ENCODE measurements at regions of chr19 and their contacts with region 1.

Region 1: DNA sequence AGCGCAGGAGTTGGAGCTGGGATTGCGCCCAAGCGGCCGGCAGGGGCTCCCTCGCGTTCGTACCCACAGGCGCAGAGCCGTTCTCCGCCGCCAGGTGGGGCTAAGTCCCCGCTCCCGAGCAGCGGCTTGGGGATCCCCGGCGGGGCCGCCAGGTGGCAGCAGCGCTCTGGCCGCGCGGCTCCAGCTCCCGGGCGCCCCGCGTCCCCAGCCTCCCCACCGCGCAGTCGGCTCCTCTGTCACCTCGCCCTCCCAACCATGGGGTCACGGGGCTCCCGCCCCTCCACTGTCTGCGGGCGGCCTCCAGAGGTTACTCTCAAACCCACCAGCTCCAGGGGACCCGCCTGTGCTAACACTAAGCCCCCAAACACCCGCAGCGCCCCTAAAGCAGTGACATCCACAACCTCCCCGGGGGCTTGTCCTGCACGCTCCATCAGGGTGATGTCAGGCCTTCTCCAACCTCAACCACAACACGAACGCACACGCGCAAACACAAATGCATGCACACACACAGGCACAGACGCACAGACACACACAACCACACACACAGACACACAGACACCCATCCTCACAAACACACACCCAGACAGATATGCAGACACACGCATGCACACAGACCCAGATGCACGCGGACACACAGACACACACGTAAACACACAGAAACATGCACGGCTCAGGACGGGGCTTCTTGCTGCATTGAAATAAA is 18.4 kb upstream of the KCTD15 start:
- DNase-seq: peak; percentile 74
- H3K4me3 Mint-ChIP-seq: peak overlapping the region; percentile 4
- H3K27ac Mint-ChIP-seq: no peak overlapping the region
- H3K4me1 Mint-ChIP-seq: peaks cover 6% of the 10 kb centered on the region
- H3K27me3 Mint-ChIP-seq: peaks cover 39% of the 10 kb centered on the region
- CTCF ChIP-seq: peak; percentile 100

Region 2: GRCh38 chr19:33763633-33764371 is 14.4 kb before region 1 on chr19:
- CTCF ChIA-PET with region 1: interaction called, 13 read pairs
- POLR2A ChIA-PET with region 1: no interaction called
- intact Hi-C with region 1: no loop called
- DNase-seq: no peak
- H3K4me3 Mint-ChIP-seq: no peak overlapping the region
- H3K27ac Mint-ChIP-seq: no peak overlapping the region
- H3K4me1 Mint-ChIP-seq: no peaks in the 10 kb centered on the region
- H3K27me3 Mint-ChIP-seq: peaks cover 1% of the 10 kb centered on the region
- CTCF ChIP-seq: no peak

Region 3: DNA sequence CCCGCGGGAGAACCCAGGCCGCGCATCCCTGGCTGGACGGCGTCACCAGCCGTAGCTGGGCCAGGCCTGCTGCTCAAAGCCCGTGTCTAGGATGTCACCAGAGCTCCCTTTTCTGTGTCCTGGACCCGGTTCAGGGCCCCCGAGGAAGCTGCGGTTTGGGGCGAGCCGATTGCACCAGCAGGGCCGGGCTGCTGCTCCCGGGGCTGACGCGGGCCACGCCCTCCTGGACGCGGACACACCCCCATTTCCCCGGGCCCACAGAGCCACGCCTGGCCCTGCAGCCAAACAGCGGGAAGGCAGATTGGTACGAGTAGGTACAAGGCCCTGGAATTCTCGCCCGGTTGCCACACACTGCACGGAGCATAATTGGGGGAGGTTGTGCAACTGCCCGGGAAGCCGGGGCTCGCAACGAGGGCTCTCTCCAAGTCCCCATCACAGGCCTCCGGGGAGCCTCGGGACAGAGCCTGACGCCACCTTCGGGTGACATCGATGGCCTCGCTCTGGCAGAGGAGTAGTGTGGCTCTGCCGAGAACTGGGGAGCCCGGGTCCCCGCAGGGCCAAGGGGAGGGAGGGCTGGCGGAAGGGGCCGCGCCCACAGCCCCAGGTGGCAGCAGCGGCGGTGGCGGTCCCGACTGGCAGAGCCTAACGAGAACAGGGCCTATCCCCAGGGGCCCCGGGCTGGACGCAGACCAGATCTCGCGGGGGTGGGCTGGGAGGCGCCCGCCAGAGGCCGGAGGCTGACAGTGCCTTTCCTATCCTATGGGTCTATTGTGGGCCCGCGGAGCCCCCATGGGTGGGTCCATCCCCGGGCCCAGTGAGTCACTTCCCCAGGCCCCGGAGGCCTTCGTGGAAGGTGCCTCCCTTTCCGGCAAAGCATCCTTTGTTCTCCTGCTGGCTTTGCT is 41.9 kb after region 1 on chr19:
- CTCF ChIA-PET with region 1: interaction called, 21 read pairs
- POLR2A ChIA-PET with region 1: no interaction called
- intact Hi-C with region 1: no loop called
- DNase-seq: peak; percentile 99
- H3K4me3 Mint-ChIP-seq: peak overlapping the region; percentile 70
- H3K27ac Mint-ChIP-seq: peak overlapping the region; percentile 35
- H3K4me1 Mint-ChIP-seq: peaks cover 8% of the 10 kb centered on the region
- H3K27me3 Mint-ChIP-seq: no peaks in the 10 kb centered on the region
- CTCF ChIP-seq: no peak

Region 4: GRCh38 chr19:33998739-33999345 is 220.6 kb after region 1 on chr19:
- CTCF ChIA-PET with region 1: interaction called, 75 read pairs
- POLR2A ChIA-PET with region 1: no interaction called
- intact Hi-C with region 1: loop called (anchors 1 kb)
- DNase-seq: peak; percentile 5
- H3K4me3 Mint-ChIP-seq: no peak overlapping the region
- H3K27ac Mint-ChIP-seq: no peak overlapping the region
- H3K4me1 Mint-ChIP-seq: no peaks in the 10 kb centered on the region
- H3K27me3 Mint-ChIP-seq: peaks cover 19% of the 10 kb centered on the region
- CTCF ChIP-seq: peak; percentile 28

Region 5: DNA sequence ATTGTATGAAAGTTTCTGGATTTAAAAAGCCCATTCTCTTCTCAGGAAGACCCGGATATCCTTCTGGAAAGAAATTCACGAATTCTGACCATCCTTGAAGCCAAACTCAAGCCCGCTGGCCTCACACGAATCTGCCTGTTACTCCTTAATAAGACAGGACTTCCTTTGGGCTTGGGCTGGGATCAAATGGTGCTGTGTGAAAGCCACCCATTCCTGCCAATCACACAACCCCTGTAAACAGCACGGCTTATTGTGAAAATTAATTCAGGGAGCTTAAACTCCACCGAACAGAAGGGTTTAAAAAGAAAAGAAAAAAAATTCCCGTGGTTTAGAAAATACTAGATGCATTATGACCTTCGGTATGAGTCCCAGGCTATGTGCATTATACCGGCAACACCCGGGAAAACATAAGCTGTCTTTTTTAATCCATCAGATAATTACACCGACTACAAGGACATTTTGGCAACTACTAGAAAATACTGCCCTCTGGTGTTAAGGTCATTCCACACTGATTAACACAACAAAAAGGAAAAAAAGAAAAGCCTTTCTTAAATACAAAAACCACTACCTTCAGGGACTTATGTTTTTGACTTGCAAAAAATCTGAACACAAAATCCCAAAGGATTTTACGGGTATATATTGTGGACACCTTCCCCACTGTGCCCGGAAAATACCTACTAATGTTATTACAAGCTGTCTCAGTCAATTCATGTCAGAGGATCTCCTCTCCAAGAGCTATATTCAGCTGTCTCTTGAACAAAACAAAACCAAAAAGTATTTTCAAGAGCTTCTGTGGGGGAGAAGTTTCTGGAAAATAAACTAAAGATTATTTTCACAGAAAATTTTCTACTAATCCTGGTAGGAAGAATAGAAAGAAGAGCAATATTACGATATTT is 318.0 kb after region 1 on chr19:
- CTCF ChIA-PET with region 1: interaction called, 129 read pairs
- POLR2A ChIA-PET with region 1: interaction called, 4 read pairs
- intact Hi-C with region 1: loop called (anchors 1 kb)
- DNase-seq: peak; percentile 69
- H3K4me3 Mint-ChIP-seq: no peak overlapping the region
- H3K27ac Mint-ChIP-seq: no peak overlapping the region
- H3K4me1 Mint-ChIP-seq: no peaks in the 10 kb centered on the region
- H3K27me3 Mint-ChIP-seq: peaks cover 28% of the 10 kb centered on the region
- CTCF ChIP-seq: peak; percentile 65

Region 6: DNA sequence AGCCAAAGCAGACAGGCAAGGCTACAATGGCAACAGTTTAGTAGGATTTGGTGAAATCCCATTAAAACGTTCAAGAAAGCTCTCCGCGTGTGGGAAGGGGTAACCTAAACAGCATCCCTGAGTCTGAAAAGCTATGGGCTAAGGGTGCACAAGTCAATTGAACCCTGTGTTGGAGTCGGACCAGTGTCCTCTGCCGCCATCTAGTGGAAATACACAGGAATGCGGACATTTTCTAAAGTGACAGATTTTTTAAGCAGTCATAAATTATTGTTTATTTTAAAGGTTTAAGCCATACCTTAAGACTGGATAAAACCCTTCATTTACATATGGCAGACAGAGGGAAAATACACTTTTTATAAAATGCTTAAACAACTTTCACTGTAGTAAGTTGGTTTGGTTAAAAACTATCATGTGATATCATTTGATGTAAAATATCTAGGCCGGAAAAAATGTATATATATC is 367.5 kb after region 1 on chr19:
- CTCF ChIA-PET with region 1: interaction called, 64 read pairs
- POLR2A ChIA-PET with region 1: no interaction called
- intact Hi-C with region 1: loop called (anchors 5 kb)
- DNase-seq: peak; percentile 77
- H3K4me3 Mint-ChIP-seq: no peak overlapping the region
- H3K27ac Mint-ChIP-seq: no peak overlapping the region
- H3K4me1 Mint-ChIP-seq: no peaks in the 10 kb centered on the region
- H3K27me3 Mint-ChIP-seq: no peaks in the 10 kb centered on the region
- CTCF ChIP-seq: peak; percentile 64